ENCODE measurements at regions of chr4 and their contacts with region 1.

Region 1: DNA sequence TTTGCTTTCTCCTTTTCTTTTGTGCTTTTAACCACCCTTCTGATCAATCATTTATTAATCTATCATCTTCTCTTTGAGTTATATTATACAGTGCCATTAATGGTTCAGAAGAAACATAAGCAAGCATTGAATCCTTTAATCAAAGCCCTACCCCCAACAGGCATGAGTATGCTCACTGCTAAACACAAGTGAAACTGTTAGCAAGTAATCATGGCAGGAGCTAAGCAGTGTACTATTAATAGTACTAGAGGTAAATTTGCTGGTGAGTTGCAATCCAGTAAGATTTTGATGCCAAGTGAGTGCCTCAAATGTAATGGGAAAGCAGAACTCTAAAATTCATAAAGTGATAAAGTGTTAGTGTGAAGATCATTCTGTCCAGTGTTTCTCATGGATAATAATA is 57.2 kb downstream of the FNIP2 start:
- DNase-seq: peak; percentile 60
- H3K4me3 Mint-ChIP-seq: peak overlapping the region; percentile 60
- H3K27ac Mint-ChIP-seq: peak overlapping the region; percentile 69
- H3K4me1 Mint-ChIP-seq: peaks cover 65% of the 10 kb centered on the region
- H3K27me3 Mint-ChIP-seq: no peaks in the 10 kb centered on the region

Region 2: DNA sequence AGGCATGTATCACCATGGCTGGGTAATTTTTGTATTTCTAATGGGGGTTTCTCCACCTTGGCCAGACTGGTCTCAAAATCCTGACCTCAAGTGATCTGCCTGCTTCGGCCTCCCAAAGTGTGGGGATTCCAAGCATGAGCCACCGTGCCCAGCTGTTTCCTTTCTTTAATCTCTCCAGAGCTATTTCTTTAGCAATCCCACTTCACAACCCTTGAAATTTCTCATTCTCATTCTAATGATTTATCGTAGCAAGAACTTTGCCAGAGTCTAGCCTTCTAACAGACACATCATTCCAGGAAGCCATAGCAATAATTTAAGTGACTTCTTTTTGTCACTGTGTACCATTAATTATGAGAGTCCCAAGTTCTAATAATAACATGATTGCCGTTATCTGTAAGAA is 235.8 kb before region 1 on chr4:
- intact Hi-C with region 1: no loop called
- DNase-seq: no peak
- H3K4me3 Mint-ChIP-seq: no peak overlapping the region
- H3K27ac Mint-ChIP-seq: no peak overlapping the region
- H3K4me1 Mint-ChIP-seq: no peaks in the 10 kb centered on the region
- H3K27me3 Mint-ChIP-seq: peaks cover 9% of the 10 kb centered on the region

Region 3: GRCh38 chr4:158722917-158723793 is 102.9 kb before region 1 on chr4 and contains the start of gene PPID:
- intact Hi-C with region 1: loop called (anchors 2 kb)
- DNase-seq: peak; percentile 96
- H3K4me3 Mint-ChIP-seq: peak within 1 kb of the TSS; percentile 95
- H3K27ac Mint-ChIP-seq: peak within 1 kb of the TSS; percentile 99
- H3K4me1 Mint-ChIP-seq: peaks cover 45% of the 10 kb centered on the region
- H3K27me3 Mint-ChIP-seq: no peaks in the 10 kb centered on the region
- total RNA-seq, gene PPID: 62.9 and 64.7 TPM in 2 replicates

Region 4: GRCh38 chr4:158809611-158810486 is 16.2 kb before region 1 on chr4:
- intact Hi-C with region 1: loop called (anchors 2 kb)
- DNase-seq: peak; percentile 70
- H3K4me3 Mint-ChIP-seq: peak overlapping the region; percentile 70
- H3K27ac Mint-ChIP-seq: peak overlapping the region; percentile 87
- H3K4me1 Mint-ChIP-seq: peaks cover 53% of the 10 kb centered on the region
- H3K27me3 Mint-ChIP-seq: no peaks in the 10 kb centered on the region